ENCODE measurements at regions of chr2 and their contacts with region 1.

Region 1: GRCh38 chr2:44528595-44528994 is 166.8 kb downstream of the CAMKMT start:
- DNase-seq: no peak
- ATAC-seq: no peak
- H3K4me3 ChIP-seq: no peak overlapping the region
- H3K4me3 Mint-ChIP-seq: no peak overlapping the region
- H3K27ac ChIP-seq: no peak overlapping the region
- H3K27ac Mint-ChIP-seq: no peak overlapping the region
- H3K4me1 ChIP-seq: no peaks in the 10 kb centered on the region
- H3K4me1 Mint-ChIP-seq: peaks cover 0 to 6% (median 5%) of the 10 kb centered on the region in 3 donors
- H3K27me3 ChIP-seq: no peaks in the 10 kb centered on the region
- H3K27me3 Mint-ChIP-seq: no peaks in the 10 kb centered on the region

Region 2: DNA sequence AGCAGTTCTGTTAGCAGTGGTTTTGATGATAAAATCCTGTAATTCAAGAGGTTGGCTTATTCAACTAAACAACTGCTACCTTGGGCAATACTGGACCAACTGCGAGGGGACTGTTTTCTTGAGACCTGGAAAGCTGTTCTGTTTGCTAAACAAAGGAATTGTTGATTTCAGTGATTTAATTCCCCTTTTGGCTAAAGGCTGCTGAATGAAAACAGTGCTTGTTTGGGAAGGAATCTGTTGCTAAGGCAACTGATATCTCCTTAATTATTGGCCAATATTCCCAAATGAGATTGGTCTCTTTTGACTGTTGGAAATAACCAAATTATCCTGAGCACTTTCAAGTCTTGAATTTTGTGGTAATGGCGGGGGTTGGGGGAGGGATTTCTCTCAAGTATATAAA is 30.0 kb before region 1 on chr2:
- CTCF ChIA-PET with region 1: no interaction called
- POLR2A ChIA-PET with region 1: interaction called in 1 of 2 experiments, 12 read pairs
- DNase-seq: no peak
- ATAC-seq: no peak
- H3K4me3 ChIP-seq: no peak overlapping the region
- H3K4me3 Mint-ChIP-seq: no peak overlapping the region
- H3K27ac ChIP-seq: no peak overlapping the region
- H3K27ac Mint-ChIP-seq: no peak overlapping the region
- H3K4me1 ChIP-seq: no peaks in the 10 kb centered on the region
- H3K4me1 Mint-ChIP-seq: peaks cover 0 to 6% (median 0%) of the 10 kb centered on the region in 3 donors
- H3K27me3 ChIP-seq: no peaks in the 10 kb centered on the region
- H3K27me3 Mint-ChIP-seq: no peaks in the 10 kb centered on the region

Measured in T-cell (primary cell).